Transverse colon (tissue), 4 donors: ENCODE measurements at regions of chr16 and their contacts with region 1.

Region 1: DNA sequence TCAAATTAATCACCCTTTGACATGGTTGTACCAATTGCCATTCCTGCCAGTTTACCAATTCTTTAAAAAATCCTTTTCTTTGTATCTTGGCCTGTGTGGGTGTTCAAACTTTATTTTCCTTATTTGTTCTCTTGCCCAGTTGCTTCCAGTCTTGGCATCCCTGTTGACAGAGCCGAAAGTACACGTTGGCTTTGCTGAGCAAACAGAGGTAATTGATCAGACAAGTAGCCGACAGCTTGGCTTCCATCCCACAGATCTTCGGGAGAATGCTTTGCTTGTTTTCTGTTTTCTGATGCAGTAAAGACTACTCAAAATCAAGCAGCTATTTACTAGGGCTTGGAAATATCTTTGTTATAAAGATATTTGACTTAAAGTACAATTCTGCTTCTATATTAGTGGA is 506.8 kb upstream of the SALL1 start:
- DNase-seq: no peak
- H3K4me3 ChIP-seq: no peak overlapping the region
- H3K27ac ChIP-seq: no peak overlapping the region
- H3K4me1 ChIP-seq: no peaks in the 10 kb centered on the region
- H3K27me3 ChIP-seq: no peaks in the 10 kb centered on the region
- CTCF ChIP-seq: no peak
- EP300 ChIP-seq: no peak
- POLR2A ChIP-seq: no peak

Region 2: GRCh38 chr16:50437769-50438437 is 1219.9 kb before region 1 on chr16:
- in situ Hi-C with region 1: no loop called
- intact Hi-C with region 1: no loop called
- DNase-seq: no peak
- H3K4me3 ChIP-seq: no peak overlapping the region
- H3K27ac ChIP-seq: no peak overlapping the region
- H3K4me1 ChIP-seq: no peaks in the 10 kb centered on the region
- H3K27me3 ChIP-seq: no peaks in the 10 kb centered on the region
- CTCF ChIP-seq: no peak
- EP300 ChIP-seq: no peak
- POLR2A ChIP-seq: no peak

Region 3: GRCh38 chr16:51696376-51696775 is 38.5 kb after region 1 on chr16:
- in situ Hi-C with region 1: no loop called
- intact Hi-C with region 1: no loop called
- DNase-seq: no peak
- H3K4me3 ChIP-seq: no peak overlapping the region
- H3K27ac ChIP-seq: no peak overlapping the region
- H3K4me1 ChIP-seq: no peaks in the 10 kb centered on the region
- H3K27me3 ChIP-seq: no peaks in the 10 kb centered on the region
- CTCF ChIP-seq: no peak
- EP300 ChIP-seq: no peak
- POLR2A ChIP-seq: no peak

Region 4: GRCh38 chr16:51747329-51747728 is 89.5 kb after region 1 on chr16:
- in situ Hi-C with region 1: no loop called
- intact Hi-C with region 1: no loop called
- DNase-seq: no peak
- H3K4me3 ChIP-seq: no peak overlapping the region
- H3K27ac ChIP-seq: no peak overlapping the region
- H3K4me1 ChIP-seq: no peaks in the 10 kb centered on the region
- H3K27me3 ChIP-seq: no peaks in the 10 kb centered on the region
- CTCF ChIP-seq: no peak
- EP300 ChIP-seq: no peak
- POLR2A ChIP-seq: no peak

Region 5: GRCh38 chr16:51797669-51798259 is 139.9 kb after region 1 on chr16:
- in situ Hi-C with region 1: no loop called
- intact Hi-C with region 1: loop called (anchors 5 kb)
- DNase-seq: no peak
- H3K4me3 ChIP-seq: no peak overlapping the region
- H3K27ac ChIP-seq: no peak overlapping the region
- H3K4me1 ChIP-seq: no peaks in the 10 kb centered on the region
- H3K27me3 ChIP-seq: no peaks in the 10 kb centered on the region
- CTCF ChIP-seq: no peak
- EP300 ChIP-seq: no peak
- POLR2A ChIP-seq: no peak